Prostate gland (tissue), 2 donors: ENCODE measurements at regions of chr2 and their contacts with region 1.

Region 1: DNA sequence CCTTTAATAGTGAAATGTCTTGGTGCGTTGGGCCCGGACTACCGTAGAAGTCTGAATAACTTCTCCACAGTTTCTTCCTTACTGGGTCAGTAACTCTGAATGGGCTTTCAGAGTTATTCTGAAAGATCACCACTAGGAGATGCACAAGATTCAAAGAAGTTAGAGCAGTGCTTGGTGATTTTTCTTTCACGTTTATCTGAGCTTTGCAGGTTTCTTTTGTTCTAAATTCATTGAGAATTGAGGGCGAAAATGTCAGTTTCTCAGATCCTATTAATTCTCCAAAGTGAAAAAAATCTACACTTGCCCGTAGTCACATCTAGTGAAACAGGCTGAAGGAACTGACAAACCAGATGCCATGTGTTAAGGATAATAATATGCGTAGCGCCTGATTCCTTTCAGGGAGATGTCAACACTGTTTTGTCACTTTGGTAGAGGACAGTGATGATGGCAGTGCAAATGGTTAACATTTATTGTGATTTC is 70.1 kb downstream of the QPCT start:
- DNase-seq: no peak
- H3K4me3 ChIP-seq: no peak overlapping the region
- H3K27ac ChIP-seq: no peak overlapping the region
- H3K4me1 ChIP-seq: no peaks in the 10 kb centered on the region
- H3K27me3 ChIP-seq: no peaks in the 10 kb centered on the region
- CTCF ChIP-seq: peak; percentile 79 to 96 (median 87)
- POLR2A ChIP-seq: no peak

Region 2: DNA sequence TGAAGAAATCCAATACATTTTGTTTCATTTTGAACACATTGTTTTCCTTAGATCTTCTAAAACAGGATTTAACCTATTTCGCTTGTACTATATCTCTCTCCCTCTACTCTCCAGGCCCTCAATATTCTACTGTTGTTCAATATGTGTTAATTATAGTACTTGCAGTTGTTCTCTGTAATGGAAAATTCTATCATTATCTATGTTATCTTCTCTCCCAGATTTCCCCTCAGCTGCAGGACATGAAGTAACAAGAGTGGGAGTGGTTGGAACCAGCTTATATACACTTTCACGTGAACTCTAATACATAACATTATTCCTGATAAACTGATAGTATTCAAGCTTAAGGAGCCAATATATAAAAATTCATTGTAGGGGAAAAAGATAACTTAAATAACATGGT is 441.2 kb before region 1 on chr2:
- intact Hi-C with region 1: no loop called
- DNase-seq: no peak
- H3K4me3 ChIP-seq: no peak overlapping the region
- H3K27ac ChIP-seq: no peak overlapping the region
- H3K4me1 ChIP-seq: no peaks in the 10 kb centered on the region
- H3K27me3 ChIP-seq: no peaks in the 10 kb centered on the region
- CTCF ChIP-seq: no peak
- POLR2A ChIP-seq: no peak

Region 3: GRCh38 chr2:37529830-37530415 is 115.4 kb after region 1 on chr2:
- intact Hi-C with region 1: loop called (anchors 10 kb)
- DNase-seq: no peak
- H3K4me3 ChIP-seq: no peak overlapping the region
- H3K27ac ChIP-seq: no peak overlapping the region
- H3K4me1 ChIP-seq: no peaks in the 10 kb centered on the region
- H3K27me3 ChIP-seq: no peaks in the 10 kb centered on the region
- CTCF ChIP-seq: no peak
- POLR2A ChIP-seq: no peak

Region 4: GRCh38 chr2:37561615-37562569 is 147.4 kb after region 1 on chr2:
- intact Hi-C with region 1: loop called (anchors 10 kb)
- DNase-seq: no peak
- H3K4me3 ChIP-seq: no peak overlapping the region
- H3K27ac ChIP-seq: no peak overlapping the region
- H3K4me1 ChIP-seq: peaks cover 5% of the 10 kb centered on the region
- H3K27me3 ChIP-seq: no peaks in the 10 kb centered on the region
- CTCF ChIP-seq: no peak
- POLR2A ChIP-seq: no peak

Region 5: GRCh38 chr2:37653805-37654378 is 239.4 kb after region 1 on chr2:
- intact Hi-C with region 1: loop called (anchors 10 kb)
- DNase-seq: peak; percentile 30
- H3K4me3 ChIP-seq: no peak overlapping the region
- H3K27ac ChIP-seq: peak overlapping the region; percentile 31 to 53
- H3K4me1 ChIP-seq: peaks cover 14% of the 10 kb centered on the region
- H3K27me3 ChIP-seq: no peaks in the 10 kb centered on the region
- CTCF ChIP-seq: no peak
- POLR2A ChIP-seq: no peak

Region 6: GRCh38 chr2:37832590-37833197 is 418.2 kb after region 1 on chr2:
- intact Hi-C with region 1: loop called (anchors 2 kb)
- DNase-seq: peak; percentile 90
- H3K4me3 ChIP-seq: no peak overlapping the region
- H3K27ac ChIP-seq: peak overlapping the region in 1 of 2 donors; percentile 21
- H3K4me1 ChIP-seq: no peaks in the 10 kb centered on the region
- H3K27me3 ChIP-seq: no peaks in the 10 kb centered on the region
- CTCF ChIP-seq: peak; percentile 54 to 94 (median 86)
- POLR2A ChIP-seq: no peak

Region 7: GRCh38 chr2:37877457-37878315 is 463.2 kb after region 1 on chr2:
- intact Hi-C with region 1: loop called (anchors 5 kb)
- DNase-seq: peak; percentile 43
- H3K4me3 ChIP-seq: no peak overlapping the region
- H3K27ac ChIP-seq: no peak overlapping the region
- H3K4me1 ChIP-seq: no peaks in the 10 kb centered on the region
- H3K27me3 ChIP-seq: no peaks in the 10 kb centered on the region
- CTCF ChIP-seq: peak; percentile 47 to 83 (median 80)
- POLR2A ChIP-seq: no peak